CD4-positive, alpha-beta T cell (primary cell): ENCODE measurements at regions of chr2 and their contacts with region 1.

Region 1: GRCh38 chr2:68925295-68925896 is 27.3 kb downstream of the GKN2 start:
- DNase-seq: peak; percentile 25 to 83 (median 44)
- ATAC-seq: peak; percentile 90
- H3K4me3 ChIP-seq: no peak overlapping the region
- H3K4me3 Mint-ChIP-seq: no peak overlapping the region
- H3K27ac ChIP-seq: no peak overlapping the region
- H3K27ac Mint-ChIP-seq: no peak overlapping the region
- H3K4me1 ChIP-seq: no peaks in the 10 kb centered on the region
- H3K4me1 Mint-ChIP-seq: peaks cover 7% of the 10 kb centered on the region
- H3K27me3 ChIP-seq: no peaks in the 10 kb centered on the region
- H3K27me3 Mint-ChIP-seq: peaks cover 6% of the 10 kb centered on the region
- CTCF ChIP-seq: peak; percentile 97

Region 2: DNA sequence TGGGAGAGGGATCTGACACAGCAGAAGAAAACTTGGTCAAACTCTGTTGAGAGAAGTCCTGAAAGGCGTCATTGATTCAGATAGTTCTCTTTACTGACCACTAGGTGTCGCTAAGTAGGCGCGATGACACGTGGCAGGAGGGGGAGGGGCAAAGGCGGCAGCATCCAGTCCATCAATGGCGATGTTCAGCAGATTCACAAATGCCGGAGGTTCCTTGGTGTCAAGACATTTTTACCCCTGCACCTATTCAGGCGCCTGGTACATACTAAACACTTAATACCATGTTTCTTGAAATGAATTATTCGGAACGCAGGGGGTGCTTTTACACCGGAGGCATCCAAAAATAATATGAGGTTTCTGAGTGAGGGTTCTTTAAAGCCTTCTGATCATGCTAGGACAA is 563.3 kb before region 1 on chr2:
- CTCF ChIA-PET with region 1: no interaction called
- POLR2A ChIA-PET with region 1: no interaction called
- intact Hi-C with region 1: loop called in 1 of 2 experiments (anchors 5 kb)
- DNase-seq: peak; percentile 66 to 92 (median 74)
- ATAC-seq: peak; percentile 98
- H3K4me3 ChIP-seq: no peak overlapping the region
- H3K4me3 Mint-ChIP-seq: peak overlapping the region; percentile 81
- H3K27ac ChIP-seq: no peak overlapping the region
- H3K27ac Mint-ChIP-seq: no peak overlapping the region
- H3K4me1 ChIP-seq: peaks cover 7% of the 10 kb centered on the region
- H3K4me1 Mint-ChIP-seq: peaks cover 14% of the 10 kb centered on the region
- H3K27me3 ChIP-seq: no peaks in the 10 kb centered on the region
- H3K27me3 Mint-ChIP-seq: peaks cover 20% of the 10 kb centered on the region
- CTCF ChIP-seq: peak; percentile 82

Region 3: GRCh38 chr2:68487773-68488355 is 437.5 kb before region 1 on chr2:
- CTCF ChIA-PET with region 1: interaction called, 26 read pairs
- POLR2A ChIA-PET with region 1: interaction called, 4 read pairs
- intact Hi-C with region 1: loop called (anchors 1 kb)
- DNase-seq: peak in 3 of 14 experiments; percentile 48 to 54 (median 52)
- ATAC-seq: peak; percentile 55
- H3K4me3 ChIP-seq: no peak overlapping the region
- H3K4me3 Mint-ChIP-seq: no peak overlapping the region
- H3K27ac ChIP-seq: no peak overlapping the region
- H3K27ac Mint-ChIP-seq: no peak overlapping the region
- H3K4me1 ChIP-seq: no peaks in the 10 kb centered on the region
- H3K4me1 Mint-ChIP-seq: peaks cover 5% of the 10 kb centered on the region
- H3K27me3 ChIP-seq: no peaks in the 10 kb centered on the region
- H3K27me3 Mint-ChIP-seq: no peaks in the 10 kb centered on the region
- CTCF ChIP-seq: peak; percentile 62

Region 4: GRCh38 chr2:68594674-68595492 is 330.5 kb before region 1 on chr2:
- CTCF ChIA-PET with region 1: interaction called, 7 read pairs
- POLR2A ChIA-PET with region 1: no interaction called
- intact Hi-C with region 1: loop called in 1 of 2 experiments (anchors 5 kb)
- DNase-seq: peak; percentile 22 to 76 (median 40)
- ATAC-seq: peak; percentile 60
- H3K4me3 ChIP-seq: no peak overlapping the region
- H3K4me3 Mint-ChIP-seq: no peak overlapping the region
- H3K27ac ChIP-seq: no peak overlapping the region
- H3K27ac Mint-ChIP-seq: no peak overlapping the region
- H3K4me1 ChIP-seq: peaks cover 5% of the 10 kb centered on the region
- H3K4me1 Mint-ChIP-seq: peaks cover 6% of the 10 kb centered on the region
- H3K27me3 ChIP-seq: no peaks in the 10 kb centered on the region
- H3K27me3 Mint-ChIP-seq: peaks cover 9% of the 10 kb centered on the region
- CTCF ChIP-seq: peak; percentile 90

Region 5: DNA sequence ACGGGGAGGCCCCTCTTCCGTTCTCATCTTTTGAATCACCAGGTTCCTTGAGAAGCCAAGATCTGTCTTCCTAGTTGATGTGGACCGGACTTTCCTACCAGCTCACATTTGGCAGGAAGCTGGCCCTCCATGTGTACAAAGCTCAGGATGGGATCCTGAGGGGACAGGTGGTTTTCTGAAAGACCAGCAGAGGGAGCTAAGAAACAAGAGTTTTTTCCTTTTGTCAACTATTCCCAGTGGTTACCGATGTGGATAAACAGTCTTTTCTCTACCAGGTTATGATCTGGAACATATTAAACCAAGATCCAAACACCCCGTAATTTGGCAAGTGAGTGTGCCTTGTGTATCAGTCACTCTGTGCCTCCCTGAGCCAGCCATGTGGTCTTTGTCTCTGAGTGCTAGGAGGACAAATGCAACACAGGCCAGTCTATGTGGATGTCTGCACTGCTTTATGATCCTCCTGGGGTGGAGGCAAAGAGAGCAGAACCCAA is 215.9 kb before region 1 on chr2:
- CTCF ChIA-PET with region 1: interaction called, 25 read pairs
- POLR2A ChIA-PET with region 1: interaction called, 10 read pairs
- intact Hi-C with region 1: loop called (anchors 1 kb)
- DNase-seq: peak in 4 of 14 experiments; percentile 36 to 62 (median 58)
- ATAC-seq: peak; percentile 77
- H3K4me3 ChIP-seq: no peak overlapping the region
- H3K4me3 Mint-ChIP-seq: no peak overlapping the region
- H3K27ac ChIP-seq: no peak overlapping the region
- H3K27ac Mint-ChIP-seq: no peak overlapping the region
- H3K4me1 ChIP-seq: peaks cover 6% of the 10 kb centered on the region
- H3K4me1 Mint-ChIP-seq: peaks cover 28% of the 10 kb centered on the region
- H3K27me3 ChIP-seq: no peaks in the 10 kb centered on the region
- H3K27me3 Mint-ChIP-seq: no peaks in the 10 kb centered on the region
- CTCF ChIP-seq: peak; percentile 92

Region 6: DNA sequence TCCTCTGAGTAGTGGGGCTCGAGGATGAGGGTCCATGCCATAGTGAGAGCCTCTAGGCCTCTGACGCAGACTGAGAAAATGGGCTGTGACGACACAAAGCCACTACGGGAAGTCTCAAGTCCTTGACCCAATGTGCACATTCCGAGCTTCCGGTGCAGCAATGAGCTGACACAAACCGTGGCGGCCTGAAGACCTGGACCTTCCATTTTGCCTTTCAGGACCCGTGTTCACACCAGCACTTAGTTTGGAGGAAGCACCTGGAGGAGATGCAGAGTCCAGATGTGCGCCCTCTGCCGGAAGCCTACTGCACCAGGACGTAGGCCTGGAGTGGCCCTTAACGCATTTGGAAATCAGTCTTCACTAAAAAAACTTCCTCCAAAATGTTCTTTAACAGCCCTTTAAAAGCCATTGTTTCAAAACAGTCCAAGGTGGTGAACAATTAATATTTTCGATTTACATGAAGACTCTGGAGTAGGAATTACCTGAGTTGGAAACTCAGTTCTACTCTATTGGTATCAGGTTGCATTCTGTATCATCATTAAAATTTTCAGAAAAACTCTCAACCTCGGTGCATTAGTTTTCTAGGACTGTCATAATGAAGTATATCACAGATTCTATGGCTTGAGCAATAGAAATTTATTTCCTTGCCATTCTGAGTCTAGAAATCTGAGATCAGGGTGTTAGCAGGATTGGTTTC is 88.1 kb before region 1 on chr2:
- CTCF ChIA-PET with region 1: interaction called, 11 read pairs
- POLR2A ChIA-PET with region 1: no interaction called
- intact Hi-C with region 1: loop called in 1 of 2 experiments (anchors 5 kb)
- DNase-seq: peak; percentile 54 to 86 (median 70)
- ATAC-seq: peak; percentile 85
- H3K4me3 ChIP-seq: no peak overlapping the region
- H3K4me3 Mint-ChIP-seq: no peak overlapping the region
- H3K27ac ChIP-seq: no peak overlapping the region
- H3K27ac Mint-ChIP-seq: peak overlapping the region; percentile 4
- H3K4me1 ChIP-seq: peaks cover 27% of the 10 kb centered on the region
- H3K4me1 Mint-ChIP-seq: peaks cover 38% of the 10 kb centered on the region
- H3K27me3 ChIP-seq: no peaks in the 10 kb centered on the region
- H3K27me3 Mint-ChIP-seq: no peaks in the 10 kb centered on the region
- CTCF ChIP-seq: peak; percentile 84

Region 7: DNA sequence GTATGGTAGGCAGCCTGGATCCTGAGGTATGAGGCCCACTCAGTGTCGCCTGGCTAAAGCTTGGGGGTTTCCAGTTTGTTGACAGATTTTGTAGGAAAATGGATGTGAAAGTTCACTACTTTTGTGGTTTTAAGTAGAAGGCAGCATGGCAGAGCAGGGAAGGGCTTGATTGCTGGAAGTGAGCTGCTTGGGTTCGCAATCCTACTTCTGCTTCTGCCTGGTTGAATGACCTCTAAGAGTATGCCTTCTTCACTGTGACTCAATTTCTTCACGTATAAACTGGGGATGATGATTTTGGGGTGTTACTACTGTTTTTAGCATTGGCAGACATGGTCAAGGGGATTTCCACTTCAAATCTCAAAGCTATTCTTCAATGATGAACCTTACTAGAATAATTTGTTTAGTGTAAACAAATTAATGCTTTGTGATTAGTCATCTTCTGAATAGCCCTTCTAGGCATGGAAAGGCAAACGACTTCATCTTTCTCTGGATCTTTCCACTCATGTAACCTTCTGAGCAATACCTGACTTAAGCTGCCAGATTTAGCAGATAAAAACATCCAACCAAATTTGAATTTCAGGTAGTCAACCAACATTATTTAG is 67.4 kb before region 1 on chr2:
- CTCF ChIA-PET with region 1: no interaction called
- POLR2A ChIA-PET with region 1: no interaction called
- intact Hi-C with region 1: no loop called
- DNase-seq: peak in 2 of 14 experiments; percentile 55 to 67
- ATAC-seq: no peak
- H3K4me3 ChIP-seq: no peak overlapping the region
- H3K4me3 Mint-ChIP-seq: no peak overlapping the region
- H3K27ac ChIP-seq: no peak overlapping the region
- H3K27ac Mint-ChIP-seq: no peak overlapping the region
- H3K4me1 ChIP-seq: no peaks in the 10 kb centered on the region
- H3K4me1 Mint-ChIP-seq: no peaks in the 10 kb centered on the region
- H3K27me3 ChIP-seq: no peaks in the 10 kb centered on the region
- H3K27me3 Mint-ChIP-seq: peaks cover 10% of the 10 kb centered on the region
- CTCF ChIP-seq: no peak

Region 8: GRCh38 chr2:68961380-68961779 is 36.0 kb after region 1 on chr2:
- CTCF ChIA-PET with region 1: no interaction called
- POLR2A ChIA-PET with region 1: no interaction called
- intact Hi-C with region 1: no loop called
- DNase-seq: no peak
- ATAC-seq: no peak
- H3K4me3 ChIP-seq: no peak overlapping the region
- H3K4me3 Mint-ChIP-seq: no peak overlapping the region
- H3K27ac ChIP-seq: no peak overlapping the region
- H3K27ac Mint-ChIP-seq: no peak overlapping the region
- H3K4me1 ChIP-seq: no peaks in the 10 kb centered on the region
- H3K4me1 Mint-ChIP-seq: no peaks in the 10 kb centered on the region
- H3K27me3 ChIP-seq: peaks cover 0 to 4% of the 10 kb centered on the region in 2 experiments
- H3K27me3 Mint-ChIP-seq: peaks cover 17% of the 10 kb centered on the region
- CTCF ChIP-seq: no peak